ENCODE measurements at regions of chr12 and their contacts with region 1.

Region 1: DNA sequence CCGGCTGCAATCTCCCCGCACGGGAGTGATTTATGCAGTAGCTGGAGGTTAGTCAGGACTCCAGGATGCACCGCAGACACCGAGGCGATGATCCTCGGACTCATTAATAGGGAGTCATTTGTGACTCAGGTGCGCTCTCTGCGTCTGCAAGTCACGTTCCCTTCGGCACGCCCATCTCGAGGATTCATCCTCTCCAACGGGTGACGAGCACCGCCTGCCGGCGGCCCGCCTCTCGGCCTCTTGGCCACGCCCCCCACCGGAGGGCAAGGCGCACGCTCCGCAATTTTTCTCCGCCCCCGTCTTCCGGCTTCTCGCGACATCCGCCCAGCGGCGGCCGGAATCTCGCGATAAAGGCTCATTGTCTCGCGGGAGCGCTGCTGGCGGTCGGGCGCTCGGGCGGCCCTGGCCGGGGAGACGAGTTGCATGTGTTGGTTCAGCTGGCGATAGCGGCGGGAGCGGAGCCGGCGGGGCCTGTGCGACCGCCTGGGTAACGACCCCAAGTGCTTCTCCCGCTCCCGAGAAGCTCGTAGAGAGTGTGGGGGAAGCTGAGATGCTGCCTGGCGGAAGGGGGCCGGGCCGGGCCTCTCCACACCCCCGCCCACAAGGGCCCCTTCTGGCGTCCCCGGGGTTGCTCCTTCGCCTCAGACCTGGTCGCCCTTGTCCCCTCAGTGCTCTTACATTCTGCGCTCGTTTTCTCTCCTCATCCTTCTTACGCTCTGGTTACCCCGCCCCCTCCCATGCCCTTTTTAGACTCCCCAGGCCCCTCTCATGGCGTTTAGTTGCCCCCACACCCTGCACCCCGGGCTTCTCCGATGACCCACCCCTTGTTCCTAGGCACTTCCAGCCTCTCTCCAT is at the start of gene DENR:
- DNase-seq: peak; percentile 96 to 97
- ATAC-seq: peak; percentile 97 to 99
- H3K4me3 ChIP-seq: peak within 1 kb of the TSS; percentile 74 to 98 (median 92)
- H3K27ac ChIP-seq: peak within 1 kb of the TSS; percentile 83 to 93 (median 90)
- H3K4me1 ChIP-seq: peaks cover 6 to 16% of the 10 kb centered on the region in 2 donors
- H3K27me3 ChIP-seq: no peaks in the 10 kb centered on the region
- CTCF ChIP-seq: peak; percentile 49 to 84 (median 79)
- POLR2A ChIP-seq: peak; percentile 73 to 82
- total RNA-seq, gene DENR: 16.1 to 26.2 (median 23.5) TPM

Region 2: DNA sequence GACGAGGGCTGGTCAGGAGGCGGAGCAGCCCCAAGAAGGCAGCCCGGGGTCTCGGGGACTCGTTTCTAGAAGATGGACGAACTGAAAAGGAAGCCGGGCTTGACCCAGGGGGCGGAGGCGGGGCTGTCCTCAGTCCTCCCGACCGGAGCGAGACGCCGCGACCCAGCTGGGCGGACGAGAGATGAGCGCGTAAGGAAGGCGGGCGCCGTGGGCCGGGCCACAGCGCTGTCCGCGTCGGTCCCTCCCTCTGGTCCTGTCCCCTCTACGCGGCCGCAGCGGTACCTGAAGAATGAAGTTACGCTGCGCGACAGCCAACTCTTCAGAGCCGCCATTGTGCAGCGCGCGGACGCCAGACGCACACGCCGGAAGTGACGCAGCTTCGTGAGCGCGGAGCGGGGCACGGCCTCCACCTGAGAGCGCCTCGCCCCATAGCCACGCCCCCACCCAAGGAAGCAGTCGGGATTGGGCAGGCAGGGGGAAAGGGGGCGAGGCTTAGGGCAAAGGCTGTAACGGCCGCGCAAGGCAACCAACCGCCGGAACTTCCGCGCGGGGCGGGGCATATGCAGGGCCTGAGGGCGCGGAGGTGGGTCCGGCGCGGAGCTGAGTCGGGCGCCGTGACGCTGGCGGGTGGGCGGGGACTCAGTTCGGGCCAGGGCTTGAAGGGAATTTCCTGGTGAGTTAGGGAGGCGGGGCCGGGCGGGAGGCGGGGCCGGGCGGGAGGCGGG is 526.8 kb before region 1 on chr12 and contains the start of gene DIABLO:
- in situ Hi-C with region 1: no loop called
- intact Hi-C with region 1: loop called (anchors 10 kb)
- DNase-seq: peak; percentile 99 to 100
- ATAC-seq: peak; percentile 92 to 97
- H3K4me3 ChIP-seq: peak within 1 kb of the TSS; percentile 87 to 98 (median 94)
- H3K27ac ChIP-seq: peak within 1 kb of the TSS; percentile 92 to 98 (median 96)
- H3K4me1 ChIP-seq: peaks cover 19 to 21% of the 10 kb centered on the region in 2 donors
- H3K27me3 ChIP-seq: no peaks in the 10 kb centered on the region
- CTCF ChIP-seq: no peak
- POLR2A ChIP-seq: peak; percentile 90 to 98
- total RNA-seq, gene DIABLO: 32.8 to 63.8 (median 44.5) TPM

Region 3: DNA sequence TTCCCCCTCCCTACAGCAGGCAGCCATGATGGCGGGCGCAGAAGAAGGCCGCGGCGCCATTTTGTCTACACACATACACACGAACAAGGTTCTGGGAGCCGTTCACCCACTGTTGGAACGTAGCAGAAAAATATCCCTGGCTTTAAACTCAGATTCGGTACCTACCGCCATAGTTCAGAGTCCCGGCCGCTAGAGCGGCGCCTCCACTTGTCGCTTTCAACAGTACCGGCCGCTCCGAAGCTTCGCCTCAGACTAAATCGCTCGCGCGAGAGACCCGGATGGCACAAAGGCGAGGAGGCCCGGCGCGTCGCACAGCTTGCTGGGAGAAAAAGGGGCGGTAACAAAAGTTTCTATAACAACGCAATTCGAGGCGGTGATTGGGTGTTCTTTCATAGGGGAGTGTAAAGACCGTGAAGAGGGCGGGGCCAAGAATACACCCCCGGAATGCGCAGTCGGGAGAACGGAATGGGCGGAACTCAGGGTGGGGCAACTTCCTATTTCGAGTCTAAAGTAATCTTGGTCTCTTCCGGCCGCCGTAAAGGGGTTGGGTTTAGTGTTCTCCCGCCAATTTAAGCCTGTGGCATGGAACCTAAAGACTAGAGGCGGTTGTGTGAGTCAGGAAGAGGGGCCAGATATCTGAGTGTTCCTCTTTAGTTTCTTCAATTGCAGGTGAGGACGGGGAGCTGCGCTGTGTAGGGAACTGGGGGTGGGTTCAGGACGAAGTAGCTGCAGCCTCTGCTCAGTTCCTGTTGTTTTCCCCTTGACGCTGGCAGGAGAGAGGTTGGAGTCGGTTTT is 225.8 kb before region 1 on chr12 and contains the starts of genes KNTC1 and RSRC2:
- in situ Hi-C with region 1: loop called in 2 of 4 experiments (anchors 10 to 25 kb)
- intact Hi-C with region 1: loop called (anchors 1 kb)
- DNase-seq: peak; percentile 99
- ATAC-seq: peak; percentile 98
- H3K4me3 ChIP-seq: peak within 1 kb of the TSS; percentile 76 to 94 (median 90)
- H3K27ac ChIP-seq: peak within 1 kb of the TSS; percentile 88 to 99 (median 95)
- H3K4me1 ChIP-seq: peaks cover 37 to 45% of the 10 kb centered on the region in 2 donors
- H3K27me3 ChIP-seq: no peaks in the 10 kb centered on the region
- CTCF ChIP-seq: no peak
- POLR2A ChIP-seq: peak; percentile 97
- total RNA-seq, gene KNTC1: 1.3 to 5.3 (median 2.2) TPM
- total RNA-seq, gene RSRC2: 43.5 to 58.8 (median 44.9) TPM

Region 4: DNA sequence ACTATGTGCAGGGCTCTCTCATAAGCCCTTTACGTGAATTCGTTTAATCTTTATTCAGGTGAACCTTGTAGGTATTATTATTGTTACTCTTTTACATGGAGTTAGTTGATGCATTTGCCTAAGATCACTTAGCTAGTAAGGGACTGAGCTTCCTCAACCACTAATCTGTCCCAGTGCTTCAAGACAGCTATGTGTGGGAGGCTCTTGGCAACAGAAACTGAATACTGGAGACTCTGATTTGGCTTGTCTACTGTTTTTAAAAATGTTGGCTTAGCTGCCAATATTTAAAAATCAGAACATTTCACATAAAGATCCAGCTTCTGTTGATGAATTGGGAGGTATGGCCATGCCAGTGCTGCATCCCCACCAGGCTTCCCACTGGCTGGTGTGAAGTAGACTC is 218.8 kb before region 1 on chr12:
- in situ Hi-C with region 1: loop called in 1 of 4 experiments (anchors 10 kb)
- intact Hi-C with region 1: no loop called
- DNase-seq: no peak
- ATAC-seq: no peak
- H3K4me3 ChIP-seq: no peak overlapping the region
- H3K27ac ChIP-seq: no peak overlapping the region
- H3K4me1 ChIP-seq: no peaks in the 10 kb centered on the region
- H3K27me3 ChIP-seq: no peaks in the 10 kb centered on the region
- CTCF ChIP-seq: no peak
- POLR2A ChIP-seq: no peak

Region 5: DNA sequence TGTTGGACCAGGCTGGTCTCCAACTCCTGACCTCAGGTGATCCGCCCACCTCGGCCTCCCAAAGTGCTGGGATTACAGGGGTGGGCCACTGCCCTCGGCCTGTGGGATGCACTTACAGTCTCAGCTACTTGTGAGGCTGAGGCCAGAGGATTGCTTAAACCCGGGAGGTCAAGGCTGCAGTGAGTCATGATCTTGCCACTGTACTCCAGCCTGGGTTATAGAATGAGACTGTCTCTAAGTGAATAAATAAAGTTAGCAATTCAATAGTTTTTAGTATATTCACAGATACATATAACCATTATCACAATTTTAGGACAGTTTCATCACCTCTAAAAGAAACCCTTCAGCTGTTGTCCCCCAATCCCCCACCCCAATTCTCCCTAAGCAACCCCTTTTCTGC is 110.7 kb before region 1 on chr12:
- in situ Hi-C with region 1: no loop called
- intact Hi-C with region 1: loop called (anchors 2 kb)
- DNase-seq: no peak
- ATAC-seq: no peak
- H3K4me3 ChIP-seq: no peak overlapping the region
- H3K27ac ChIP-seq: no peak overlapping the region
- H3K4me1 ChIP-seq: no peaks in the 10 kb centered on the region
- H3K27me3 ChIP-seq: no peaks in the 10 kb centered on the region
- CTCF ChIP-seq: no peak
- POLR2A ChIP-seq: no peak

Region 6: GRCh38 chr12:122841544-122842321 is 89.0 kb after region 1 on chr12:
- in situ Hi-C with region 1: no loop called
- intact Hi-C with region 1: no loop called
- DNase-seq: peak in 1 of 2 donors; percentile 51
- ATAC-seq: peak; percentile 75 to 77
- H3K4me3 ChIP-seq: no peak overlapping the region
- H3K27ac ChIP-seq: peak overlapping the region; percentile 65 to 78 (median 73)
- H3K4me1 ChIP-seq: peaks cover 23 to 30% of the 10 kb centered on the region in 2 donors
- H3K27me3 ChIP-seq: no peaks in the 10 kb centered on the region
- CTCF ChIP-seq: no peak
- POLR2A ChIP-seq: peak in 1 of 2 donors; percentile 17